Colonic mucosa (tissue), 4 donors: ENCODE measurements at regions of chr18 and their contacts with region 1.

Region 1: GRCh38 chr18:5600378-5601071 is 56.7 kb upstream of the EPB41L3 start:
- DNase-seq: no peak
- H3K4me3 ChIP-seq: no peak overlapping the region
- H3K27ac ChIP-seq: no peak overlapping the region
- H3K4me1 ChIP-seq: no peaks in the 10 kb centered on the region
- H3K27me3 ChIP-seq: no peaks in the 10 kb centered on the region
- CTCF ChIP-seq: peak; percentile 16

Region 2: GRCh38 chr18:5841518-5841917 is 241.0 kb after region 1 on chr18:
- intact Hi-C with region 1: loop called (anchors 10 kb)
- DNase-seq: no peak
- H3K4me3 ChIP-seq: no peak overlapping the region
- H3K27ac ChIP-seq: no peak overlapping the region
- H3K4me1 ChIP-seq: no peaks in the 10 kb centered on the region
- H3K27me3 ChIP-seq: no peaks in the 10 kb centered on the region
- CTCF ChIP-seq: no peak